ENCODE measurements at regions of chr4 and their contacts with region 1.

Region 1: DNA sequence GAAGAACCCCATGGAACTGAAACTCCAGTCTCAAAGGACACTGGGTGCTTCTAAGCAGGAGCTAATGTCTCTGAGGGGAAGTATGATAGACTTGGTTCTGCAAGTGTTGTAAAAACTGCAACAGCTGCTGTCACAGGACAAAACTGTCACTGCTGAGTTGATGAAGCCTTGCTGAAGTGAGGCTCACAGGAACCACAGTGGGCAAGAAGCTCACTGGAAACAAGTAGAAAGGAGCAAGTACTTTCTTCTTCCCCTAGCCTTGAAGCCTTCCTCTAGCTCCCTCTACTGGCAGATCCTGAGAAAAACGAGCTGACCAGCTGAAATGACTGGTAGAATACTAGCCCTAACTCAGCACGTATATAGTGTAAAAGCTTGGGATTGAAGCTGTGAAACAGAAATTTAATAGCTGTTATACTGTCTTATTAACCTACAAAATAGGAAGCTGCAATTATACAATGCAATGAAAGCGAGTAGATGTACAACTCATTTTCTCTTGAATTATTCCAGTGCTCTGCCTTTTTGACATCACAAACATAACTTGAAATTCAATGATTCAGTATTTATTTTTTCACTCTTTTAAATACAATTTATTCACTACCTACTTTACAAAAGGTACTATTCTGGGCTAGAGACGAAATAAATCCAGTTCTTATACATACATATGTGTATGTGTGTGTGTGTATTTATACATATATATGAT is 91.4 kb downstream of the GABRB1 start:
- DNase-seq: peak; percentile 29
- H3K4me3 Mint-ChIP-seq: no peak overlapping the region
- H3K27ac Mint-ChIP-seq: no peak overlapping the region
- H3K4me1 Mint-ChIP-seq: peaks cover 3% of the 10 kb centered on the region
- H3K27me3 Mint-ChIP-seq: no peaks in the 10 kb centered on the region

Region 2: GRCh38 chr4:46937493-46937892 is 185.2 kb before region 1 on chr4:
- intact Hi-C with region 1: loop called (anchors 2 kb)
- DNase-seq: no peak
- H3K4me3 Mint-ChIP-seq: no peak overlapping the region
- H3K27ac Mint-ChIP-seq: no peak overlapping the region
- H3K4me1 Mint-ChIP-seq: no peaks in the 10 kb centered on the region
- H3K27me3 Mint-ChIP-seq: no peaks in the 10 kb centered on the region

Region 3: DNA sequence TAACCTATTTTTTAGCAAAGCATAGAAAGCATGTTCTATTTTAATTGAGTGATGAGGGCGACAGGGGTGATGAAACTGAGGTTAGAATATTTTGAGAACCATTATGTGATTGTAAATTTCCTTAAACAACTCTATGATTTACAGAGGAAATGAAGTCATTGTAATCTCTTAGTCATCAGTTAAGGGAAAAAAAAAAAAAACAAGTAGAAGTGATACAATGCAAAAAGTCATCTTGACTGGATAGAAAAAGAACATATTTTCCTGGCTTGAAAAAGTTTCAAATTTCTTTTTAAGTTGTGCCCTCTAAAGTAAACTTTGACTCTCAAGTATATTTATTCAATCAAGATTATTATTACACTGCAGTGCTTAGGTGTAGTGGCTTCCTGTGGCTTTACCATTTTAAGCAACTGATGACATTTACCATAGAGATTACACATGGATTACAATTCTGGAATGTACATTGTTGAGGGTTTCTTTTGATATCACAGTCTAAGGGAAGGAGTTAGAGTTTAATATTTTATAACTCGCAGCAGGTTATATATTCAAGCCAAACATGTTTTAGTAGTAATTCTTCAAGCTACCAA is 50.8 kb before region 1 on chr4:
- intact Hi-C with region 1: no loop called
- DNase-seq: no peak
- H3K4me3 Mint-ChIP-seq: no peak overlapping the region
- H3K27ac Mint-ChIP-seq: no peak overlapping the region
- H3K4me1 Mint-ChIP-seq: peaks cover 6% of the 10 kb centered on the region
- H3K27me3 Mint-ChIP-seq: no peaks in the 10 kb centered on the region

Region 4: DNA sequence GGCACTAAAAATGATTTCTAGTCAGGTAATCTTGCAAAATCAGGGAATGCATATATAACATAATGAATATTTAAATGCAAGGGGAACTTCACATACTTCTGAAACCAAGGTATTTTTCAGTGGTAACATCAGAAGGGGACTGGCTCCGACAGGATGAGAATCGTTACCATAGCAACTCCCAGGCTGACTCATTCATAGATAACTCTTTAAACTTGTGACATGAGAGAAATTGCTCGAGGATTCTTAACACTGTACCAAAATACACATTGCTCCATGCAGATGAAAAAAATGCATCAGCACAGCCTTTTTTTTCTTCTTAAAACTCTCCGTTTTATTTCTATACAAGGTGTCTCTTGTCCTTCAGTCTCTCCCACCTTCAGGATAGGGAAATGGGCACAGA is 22.9 kb after region 1 on chr4:
- intact Hi-C with region 1: no loop called
- DNase-seq: no peak
- H3K4me3 Mint-ChIP-seq: no peak overlapping the region
- H3K27ac Mint-ChIP-seq: no peak overlapping the region
- H3K4me1 Mint-ChIP-seq: no peaks in the 10 kb centered on the region
- H3K27me3 Mint-ChIP-seq: peaks cover 6% of the 10 kb centered on the region

Measured in activated T-helper 2 cell treated with anti-CD3 and anti-CD28 coated beads, Interferon-gamma antibody, Interleukin-2, Interleukin-4, amounts not matched to agents 10 μg/mL and 5 μg/mL and 100 μg/mL, durations not matched to agents 14 hours and 24 hours and 36 hours (primary cell).